Dendritic cell treated with granulocyte-macrophage colony-stimulating factor and Interleukin-4, amounts not matched to agents 40 ng/mL and 50 ng/mL, for 4 days (primary cell): ENCODE measurements at regions of chr14 and their contacts with region 1.

Region 1: DNA sequence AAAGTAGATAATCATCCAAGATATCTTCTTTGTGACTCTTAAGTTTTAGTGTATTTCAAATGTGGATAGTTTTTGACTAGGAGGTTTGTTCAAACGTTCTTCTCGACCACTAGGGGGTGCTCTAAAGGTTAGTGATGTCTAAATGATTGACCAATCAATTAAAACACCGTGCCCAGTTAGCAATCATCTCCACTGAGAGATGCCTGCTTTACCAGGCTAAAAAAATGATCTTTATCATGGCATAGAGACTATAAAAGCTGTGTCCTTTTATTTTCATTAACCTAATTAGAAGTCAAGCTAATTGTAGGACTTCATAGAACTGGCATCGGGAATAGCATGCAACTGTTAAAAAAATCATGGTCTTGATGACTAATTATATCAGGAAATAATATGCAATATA is 153.9 kb downstream of the PRKCH start:
- H3K4me3 Mint-ChIP-seq: no peak overlapping the region
- H3K27ac Mint-ChIP-seq: no peak overlapping the region
- H3K4me1 Mint-ChIP-seq: peaks cover 72% of the 10 kb centered on the region
- H3K27me3 Mint-ChIP-seq: no peaks in the 10 kb centered on the region

Region 2: DNA sequence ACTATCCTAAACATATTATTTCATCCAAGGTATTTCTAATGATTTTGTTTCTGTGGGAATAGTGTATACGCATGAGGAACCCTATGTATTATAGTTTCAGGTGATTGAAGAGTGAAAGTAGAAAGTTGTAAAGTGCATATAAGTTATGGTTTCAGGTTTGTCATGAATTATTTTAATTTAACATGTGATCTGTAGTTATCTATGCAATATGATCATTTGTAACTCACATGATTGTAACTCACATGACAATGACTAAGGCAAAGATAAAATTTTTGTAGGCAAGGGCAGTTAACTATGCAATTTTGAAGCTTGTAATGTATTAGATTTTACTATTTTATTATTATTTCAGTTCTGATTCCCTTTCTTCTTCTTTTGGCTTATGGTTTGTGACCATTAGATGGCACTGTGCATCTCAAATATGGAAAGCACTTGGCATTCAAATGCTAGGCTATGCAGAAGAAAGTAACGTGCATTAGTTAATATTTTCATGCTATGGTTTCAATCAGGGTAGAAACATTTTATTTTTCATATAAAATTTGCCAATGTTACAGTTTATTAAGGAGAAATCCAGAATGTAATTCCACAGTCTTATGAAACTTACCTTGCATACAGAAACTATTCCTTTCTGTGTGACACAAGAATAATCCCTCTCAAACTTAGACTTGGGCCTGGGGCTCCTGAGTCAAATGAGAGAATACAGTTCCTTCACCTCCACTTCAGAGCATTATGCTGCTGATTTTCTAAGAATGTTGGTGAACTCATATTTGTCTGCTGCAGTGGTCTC is 178.4 kb before region 1 on chr14:
- intact Hi-C with region 1: no loop called
- H3K4me3 Mint-ChIP-seq: no peak overlapping the region
- H3K27ac Mint-ChIP-seq: no peak overlapping the region
- H3K4me1 Mint-ChIP-seq: no peaks in the 10 kb centered on the region
- H3K27me3 Mint-ChIP-seq: no peaks in the 10 kb centered on the region

Region 3: GRCh38 chr14:61420326-61420725 is 55.0 kb before region 1 on chr14:
- intact Hi-C with region 1: no loop called
- H3K4me3 Mint-ChIP-seq: no peak overlapping the region
- H3K27ac Mint-ChIP-seq: no peak overlapping the region
- H3K4me1 Mint-ChIP-seq: peaks cover 18% of the 10 kb centered on the region
- H3K27me3 Mint-ChIP-seq: no peaks in the 10 kb centered on the region

Region 4: GRCh38 chr14:61493239-61493638 is 17.9 kb after region 1 on chr14:
- intact Hi-C with region 1: no loop called
- H3K4me3 Mint-ChIP-seq: no peak overlapping the region
- H3K27ac Mint-ChIP-seq: no peak overlapping the region
- H3K4me1 Mint-ChIP-seq: no peaks in the 10 kb centered on the region
- H3K27me3 Mint-ChIP-seq: no peaks in the 10 kb centered on the region

Region 5: GRCh38 chr14:61525293-61526011 is 50.1 kb after region 1 on chr14:
- intact Hi-C with region 1: loop called (anchors 5 kb)
- H3K4me3 Mint-ChIP-seq: no peak overlapping the region
- H3K27ac Mint-ChIP-seq: peak overlapping the region; percentile 68
- H3K4me1 Mint-ChIP-seq: peaks cover 42% of the 10 kb centered on the region
- H3K27me3 Mint-ChIP-seq: peaks cover 2% of the 10 kb centered on the region

Region 6: GRCh38 chr14:61553725-61554641 is 78.7 kb after region 1 on chr14:
- intact Hi-C with region 1: loop called (anchors 5 kb)
- H3K4me3 Mint-ChIP-seq: no peak overlapping the region
- H3K27ac Mint-ChIP-seq: peak overlapping the region; percentile 91
- H3K4me1 Mint-ChIP-seq: peaks cover 70% of the 10 kb centered on the region
- H3K27me3 Mint-ChIP-seq: no peaks in the 10 kb centered on the region